Activated T-helper 1 cell treated with anti-CD3 and anti-CD28 coated beads, Interleukin-12 subunit alpha, Interleukin-12 subunit beta, Interleukin-2, Interleukin-4 antibody, amounts not matched to agents 30 ng/mL and 10 ng/mL and 1 ng/mL, durations not matched to agents 14 hours and 24 hours and 36 hours (primary cell): ENCODE measurements at regions of chr16 and their contacts with region 1.

Region 1: DNA sequence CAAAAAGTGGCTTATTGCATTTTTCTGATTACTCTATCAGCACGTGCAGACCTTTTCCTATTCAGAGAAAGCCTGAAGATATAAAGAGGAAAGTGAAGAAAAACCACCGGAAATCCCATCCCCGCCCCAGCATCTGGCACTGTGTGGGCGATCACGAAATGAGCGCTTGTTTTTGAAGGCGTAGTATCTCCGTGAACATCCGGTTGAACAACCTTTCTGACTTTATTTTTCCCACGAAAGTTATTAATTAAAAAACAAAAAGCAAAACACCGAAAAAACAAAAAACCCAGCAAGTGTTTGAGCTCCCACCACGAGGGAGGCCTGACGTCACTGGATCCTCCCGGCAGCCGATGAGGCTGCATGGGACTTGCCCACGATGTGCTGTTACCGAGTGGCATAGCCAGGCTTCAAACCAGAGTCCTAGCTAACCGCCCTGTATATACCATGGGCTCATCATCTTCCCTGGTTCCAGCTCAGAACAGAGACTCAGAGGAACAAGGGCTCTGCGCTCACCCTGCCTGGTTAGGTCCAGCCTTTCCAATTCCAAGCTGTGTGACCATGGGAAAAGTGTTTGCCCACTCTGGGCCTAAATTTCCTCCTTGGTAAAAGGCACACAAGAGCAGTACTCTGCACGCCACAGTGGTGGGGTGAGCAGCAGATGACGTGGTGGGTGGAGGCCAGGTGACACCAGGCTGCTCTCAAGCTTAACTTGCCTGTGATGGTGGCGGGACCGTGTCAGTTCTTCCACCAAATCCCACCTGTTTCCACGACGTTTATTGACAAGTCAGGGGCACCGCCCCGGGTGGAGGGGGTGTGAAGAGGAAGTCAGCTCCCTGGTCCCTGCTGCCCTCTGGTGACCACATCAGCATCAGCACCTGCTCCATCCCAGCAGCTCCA is 34.3 kb upstream of the IL21R start:
- DNase-seq: peak; percentile 76
- H3K4me3 Mint-ChIP-seq: peak overlapping the region; percentile 56
- H3K27ac Mint-ChIP-seq: peak overlapping the region; percentile 96
- H3K4me1 Mint-ChIP-seq: peaks cover 67% of the 10 kb centered on the region
- H3K27me3 Mint-ChIP-seq: no peaks in the 10 kb centered on the region

Region 2: GRCh38 chr16:27109666-27110523 is 257.8 kb before region 1 on chr16:
- intact Hi-C with region 1: loop called (anchors 5 kb)
- DNase-seq: peak; percentile 62
- H3K4me3 Mint-ChIP-seq: peak overlapping the region; percentile 64
- H3K27ac Mint-ChIP-seq: no peak overlapping the region
- H3K4me1 Mint-ChIP-seq: no peaks in the 10 kb centered on the region
- H3K27me3 Mint-ChIP-seq: peaks cover 6% of the 10 kb centered on the region

Region 3: GRCh38 chr16:27203429-27204231 is 164.1 kb before region 1 on chr16 and contains the start of gene KDM8:
- intact Hi-C with region 1: loop called (anchors 1 kb)
- DNase-seq: peak; percentile 100
- H3K4me3 Mint-ChIP-seq: peak within 1 kb of the TSS; percentile 97
- H3K27ac Mint-ChIP-seq: peak within 1 kb of the TSS; percentile 99
- H3K4me1 Mint-ChIP-seq: peaks cover 53% of the 10 kb centered on the region
- H3K27me3 Mint-ChIP-seq: no peaks in the 10 kb centered on the region
- total RNA-seq, gene KDM8: 12.5 and 14.5 TPM in 2 replicates

Region 4: DNA sequence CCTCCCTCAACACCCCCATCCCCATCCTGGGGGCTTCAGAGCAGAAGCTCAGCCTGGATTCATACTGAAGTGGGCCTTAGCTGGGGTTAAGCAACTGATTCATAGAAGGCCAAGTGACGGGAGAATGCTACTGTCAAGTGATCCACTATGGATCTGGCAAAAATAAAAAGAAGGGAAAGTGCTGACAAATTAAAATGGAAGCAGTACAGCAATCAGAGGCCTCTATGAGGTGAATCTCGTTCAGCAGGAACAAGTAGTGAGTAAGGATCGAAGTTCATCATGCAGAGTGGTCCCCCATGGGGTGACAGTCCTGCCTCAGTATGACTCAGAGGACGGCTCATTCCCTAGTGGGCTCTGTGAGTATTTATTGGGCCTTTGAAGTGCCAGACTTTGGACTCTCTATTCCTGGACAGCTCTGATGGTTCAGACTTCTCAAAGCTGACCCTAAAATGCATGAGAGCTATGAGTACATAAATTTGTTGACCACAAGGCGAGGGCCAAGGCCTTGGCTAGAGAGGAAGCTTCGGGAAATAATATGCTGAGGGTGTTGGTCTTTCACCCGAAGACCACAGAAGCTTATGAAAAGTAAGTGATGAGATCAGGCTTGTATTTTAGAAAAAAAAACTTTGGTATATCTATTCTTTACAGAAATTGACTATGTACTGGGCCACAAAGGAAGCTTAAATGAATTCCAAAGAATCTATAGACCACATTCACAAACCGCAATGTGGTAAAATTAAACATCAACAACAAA is 93.9 kb before region 1 on chr16:
- intact Hi-C with region 1: loop called (anchors 1 kb)
- DNase-seq: no peak
- H3K4me3 Mint-ChIP-seq: peak overlapping the region; percentile 32
- H3K27ac Mint-ChIP-seq: peak overlapping the region; percentile 87
- H3K4me1 Mint-ChIP-seq: peaks cover 65% of the 10 kb centered on the region
- H3K27me3 Mint-ChIP-seq: no peaks in the 10 kb centered on the region

Region 5: DNA sequence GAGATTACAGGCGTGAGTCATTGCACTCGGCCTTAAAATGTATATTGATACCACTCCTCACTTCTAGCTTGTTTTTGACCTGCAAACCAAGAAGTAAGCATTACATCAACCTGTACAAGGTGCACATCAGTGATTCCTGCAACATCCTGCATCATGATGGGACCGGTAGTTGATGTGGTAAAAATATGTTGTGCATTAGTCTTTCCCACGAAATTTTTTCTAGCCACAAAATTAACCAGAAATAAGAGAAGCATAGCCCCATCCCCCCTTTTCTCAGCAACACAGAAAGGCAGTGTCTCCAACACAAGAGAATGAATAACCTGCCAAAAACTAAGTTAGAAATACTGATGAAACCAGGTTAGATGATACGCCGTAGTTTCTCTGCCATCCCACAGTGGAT is 78.0 kb before region 1 on chr16:
- intact Hi-C with region 1: no loop called
- DNase-seq: no peak
- H3K4me3 Mint-ChIP-seq: peak overlapping the region; percentile 32
- H3K27ac Mint-ChIP-seq: peak overlapping the region; percentile 21
- H3K4me1 Mint-ChIP-seq: peaks cover 43% of the 10 kb centered on the region
- H3K27me3 Mint-ChIP-seq: peaks cover 5% of the 10 kb centered on the region

Region 6: GRCh38 chr16:27387724-27388123 is 20.0 kb after region 1 on chr16:
- intact Hi-C with region 1: loop called (anchors 1 kb)
- DNase-seq: no peak
- H3K4me3 Mint-ChIP-seq: no peak overlapping the region
- H3K27ac Mint-ChIP-seq: peak overlapping the region; percentile 76
- H3K4me1 Mint-ChIP-seq: peaks cover 46% of the 10 kb centered on the region
- H3K27me3 Mint-ChIP-seq: no peaks in the 10 kb centered on the region

Region 7: DNA sequence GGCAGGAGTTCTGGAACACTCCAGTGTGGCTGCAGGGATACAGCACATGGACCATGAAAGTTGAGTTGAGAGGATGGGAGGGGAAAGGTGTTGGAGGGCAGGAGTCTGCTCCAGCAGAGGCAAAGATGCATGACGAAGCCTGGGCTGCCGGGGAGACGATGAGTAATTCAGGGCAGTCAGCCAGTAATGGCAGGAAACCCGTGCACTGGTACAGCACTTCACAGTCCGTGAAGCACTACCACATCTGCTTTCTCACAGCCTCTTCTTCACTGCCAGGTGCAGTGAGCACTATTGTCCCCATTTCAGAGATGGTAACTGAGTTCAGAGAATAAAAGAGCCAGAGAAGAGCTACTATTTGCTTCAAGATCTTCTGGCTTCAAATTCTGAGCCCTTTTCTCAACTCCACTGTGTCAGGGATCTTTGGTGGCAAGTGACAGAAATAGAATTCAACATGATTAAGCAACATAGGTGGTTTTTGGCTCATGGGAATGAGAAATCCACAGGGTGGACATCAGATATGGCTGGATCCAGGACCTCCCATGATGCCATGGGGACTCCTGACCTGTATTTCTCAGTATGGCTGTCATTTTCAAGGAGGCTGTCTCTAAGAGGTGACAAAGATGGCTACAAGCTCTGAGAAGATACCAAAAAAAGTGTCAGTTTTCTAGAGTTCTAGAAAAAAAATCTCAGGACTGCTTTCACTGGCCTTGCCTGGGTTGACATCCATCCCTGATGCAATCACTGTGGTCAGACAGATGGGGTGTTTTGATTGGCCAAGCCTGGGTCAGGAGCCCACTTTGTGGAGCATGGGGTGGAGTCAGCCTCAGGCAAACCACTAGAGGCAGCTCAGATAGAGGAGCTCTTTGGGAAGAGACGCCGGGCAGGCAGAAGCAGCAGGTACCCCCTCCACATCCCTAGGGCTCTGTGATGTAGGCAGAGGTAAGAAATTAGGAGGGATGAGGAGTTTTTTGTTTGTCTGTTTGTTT is 59.0 kb after region 1 on chr16:
- intact Hi-C with region 1: loop called (anchors 1 kb)
- DNase-seq: peak; percentile 72
- H3K4me3 Mint-ChIP-seq: peak overlapping the region; percentile 24
- H3K27ac Mint-ChIP-seq: peak overlapping the region; percentile 81
- H3K4me1 Mint-ChIP-seq: peaks cover 78% of the 10 kb centered on the region
- H3K27me3 Mint-ChIP-seq: no peaks in the 10 kb centered on the region